ENCODE measurements at regions of chr1 and their contacts with region 1.

Region 1: DNA sequence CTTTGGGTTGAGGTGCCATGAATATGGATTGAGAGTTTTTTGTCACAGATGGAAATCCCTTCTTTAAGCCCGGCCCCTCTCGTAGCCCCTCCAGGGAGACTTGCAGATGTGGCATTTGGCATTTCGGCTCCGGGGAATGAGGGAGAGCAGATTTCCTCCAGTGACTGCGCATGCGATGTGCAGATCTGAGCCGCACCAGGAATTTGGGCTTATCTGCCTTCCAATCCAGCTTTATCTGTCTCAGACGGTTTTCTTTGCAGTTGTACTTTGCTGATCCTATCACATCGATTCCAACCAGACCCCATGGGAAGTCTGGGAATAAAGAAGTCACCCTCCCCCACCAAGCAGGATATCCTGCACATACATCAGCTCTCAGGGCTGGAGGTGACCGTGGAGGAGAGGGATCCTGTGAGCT is 11.7 kb downstream of the KIF26B start:
- DNase-seq: no peak
- ATAC-seq: no peak
- H3K4me3 Mint-ChIP-seq: no peak overlapping the region
- H3K27ac Mint-ChIP-seq: no peak overlapping the region
- H3K4me1 Mint-ChIP-seq: peaks cover 6% of the 10 kb centered on the region
- H3K27me3 Mint-ChIP-seq: peaks cover 41% of the 10 kb centered on the region

Region 2: DNA sequence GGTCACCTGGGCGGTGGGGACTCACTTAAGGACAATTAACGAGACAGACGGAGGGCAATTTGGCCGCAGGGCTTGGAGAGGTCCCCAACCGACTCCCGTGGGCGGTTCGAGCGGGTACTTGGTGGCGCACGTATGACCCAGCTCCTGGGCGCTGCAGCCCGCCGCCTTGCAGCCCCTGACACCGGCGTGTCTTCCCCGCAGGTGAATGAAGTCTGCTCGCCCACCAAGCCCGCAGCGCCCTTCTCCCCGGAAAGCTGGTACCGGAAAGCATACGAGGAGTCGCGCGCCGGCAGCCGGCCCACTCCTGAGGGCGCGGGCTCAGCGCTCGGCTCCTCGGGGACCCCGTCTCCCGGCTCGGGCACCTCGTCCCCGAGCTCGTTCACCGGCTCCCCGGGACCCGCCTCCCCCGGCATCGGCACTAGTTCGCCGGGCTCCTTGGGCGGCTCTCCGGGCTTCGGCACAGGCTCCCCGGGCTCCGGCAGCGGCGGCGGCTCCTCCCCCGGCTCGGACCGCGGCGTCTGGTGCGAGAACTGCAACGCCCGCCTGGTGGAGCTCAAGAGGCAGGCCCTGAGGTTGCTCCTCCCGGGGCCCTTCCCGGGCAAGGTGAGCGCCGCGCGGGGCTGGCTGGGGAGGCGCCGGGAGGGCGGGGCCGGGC is 10.3 kb before region 1 on chr1:
- CTCF ChIA-PET with region 1: interaction called, 14 read pairs
- DNase-seq: peak; percentile 89
- ATAC-seq: peak; percentile 96
- H3K4me3 Mint-ChIP-seq: peak overlapping the region; percentile 65
- H3K27ac Mint-ChIP-seq: no peak overlapping the region
- H3K4me1 Mint-ChIP-seq: peaks cover 27% of the 10 kb centered on the region
- H3K27me3 Mint-ChIP-seq: peaks cover 69% of the 10 kb centered on the region

Region 3: GRCh38 chr1:245225322-245226202 is 59.1 kb after region 1 on chr1:
- CTCF ChIA-PET with region 1: no interaction called
- DNase-seq: no peak
- ATAC-seq: no peak
- H3K4me3 Mint-ChIP-seq: no peak overlapping the region
- H3K27ac Mint-ChIP-seq: no peak overlapping the region
- H3K4me1 Mint-ChIP-seq: no peaks in the 10 kb centered on the region
- H3K27me3 Mint-ChIP-seq: no peaks in the 10 kb centered on the region